ENCODE measurements at regions of chr9 and their contacts with region 1.

Region 1: GRCh38 chr9:76704593-76705204 is 59.5 kb upstream of the PCA3 start:
- DNase-seq: peak; percentile 58
- ATAC-seq: peak; percentile 64
- H3K4me3 ChIP-seq: no peak overlapping the region
- H3K27ac ChIP-seq: no peak overlapping the region
- H3K4me1 ChIP-seq: no peaks in the 10 kb centered on the region
- H3K27me3 ChIP-seq: peaks cover 0 to 22% of the 10 kb centered on the region in 2 experiments; a peak in 3 of 5 replicates
- CTCF ChIP-seq: peak; percentile 85
- EP300 ChIP-seq: no peak
- POLR2A ChIP-seq: no peak
- RAD21 ChIP-seq: peak; percentile 60; the same call in 1 of the 2 replicates

Region 2: DNA sequence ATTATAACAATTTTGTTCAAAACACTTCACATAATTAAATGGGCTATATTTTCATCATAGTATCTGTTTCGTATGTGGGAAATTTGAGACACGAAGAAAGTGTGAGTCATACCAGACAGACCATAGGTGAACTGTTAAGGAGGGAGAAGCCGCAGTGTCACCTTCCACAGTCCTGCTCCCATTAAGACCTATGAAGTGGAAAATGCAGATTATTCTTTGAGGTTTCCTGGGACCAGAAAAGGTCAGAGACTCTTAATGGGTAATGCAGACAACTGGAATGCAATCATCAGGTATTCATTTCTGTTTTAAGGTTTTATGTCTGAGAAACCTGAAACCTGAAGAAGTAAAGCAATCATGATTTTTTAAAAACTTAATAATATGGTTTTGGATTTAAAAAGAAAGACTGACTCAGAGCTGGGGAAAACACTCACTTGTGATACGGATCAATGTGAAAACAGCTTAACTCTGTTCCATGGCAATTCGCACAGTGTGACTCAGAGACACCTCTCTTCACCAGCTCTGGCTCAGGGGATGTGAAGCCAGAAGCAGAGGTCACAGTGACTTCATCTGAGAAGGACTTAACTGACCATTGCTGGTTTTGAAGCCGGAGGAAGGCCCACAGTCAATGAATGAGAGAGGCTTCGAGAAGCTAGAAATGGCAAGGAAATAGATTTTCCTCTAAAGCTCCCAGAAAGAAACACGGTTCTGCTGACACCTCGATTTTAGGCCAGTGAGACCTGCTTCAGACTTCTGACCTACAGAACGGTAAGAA is 263.0 kb before region 1 on chr9:
- CTCF ChIA-PET with region 1: interaction called, 15 read pairs
- POLR2A ChIA-PET with region 1: no interaction called
- in situ Hi-C with region 1: no loop called
- intact Hi-C with region 1: no loop called
- DNase-seq: no peak
- ATAC-seq: no peak; the same call in 2 of the 3 replicates
- H3K4me3 ChIP-seq: no peak overlapping the region
- H3K27ac ChIP-seq: no peak overlapping the region
- H3K4me1 ChIP-seq: peaks cover 12% of the 10 kb centered on the region
- H3K27me3 ChIP-seq: no peaks in the 10 kb centered on the region
- CTCF ChIP-seq: no peak
- EP300 ChIP-seq: no peak
- POLR2A ChIP-seq: no peak
- RAD21 ChIP-seq: no peak

Region 3: GRCh38 chr9:76451234-76451633 is 253.5 kb before region 1 on chr9:
- CTCF ChIA-PET with region 1: interaction called, 15 read pairs
- POLR2A ChIA-PET with region 1: no interaction called
- in situ Hi-C with region 1: no loop called
- intact Hi-C with region 1: loop called (anchors 1 kb)
- DNase-seq: no peak
- ATAC-seq: no peak
- H3K4me3 ChIP-seq: no peak overlapping the region
- H3K27ac ChIP-seq: no peak overlapping the region
- H3K4me1 ChIP-seq: peaks cover 6% of the 10 kb centered on the region
- H3K27me3 ChIP-seq: no peaks in the 10 kb centered on the region
- CTCF ChIP-seq: no peak
- EP300 ChIP-seq: no peak
- POLR2A ChIP-seq: no peak
- RAD21 ChIP-seq: no peak

Region 4: GRCh38 chr9:76667521-76667957 is 37.2 kb before region 1 on chr9:
- CTCF ChIA-PET with region 1: interaction called, 25 read pairs
- POLR2A ChIA-PET with region 1: no interaction called
- in situ Hi-C with region 1: loop called (anchors 5 kb)
- intact Hi-C with region 1: loop called (anchors 2 kb)
- DNase-seq: no peak
- ATAC-seq: no peak
- H3K4me3 ChIP-seq: no peak overlapping the region
- H3K27ac ChIP-seq: no peak overlapping the region
- H3K4me1 ChIP-seq: no peaks in the 10 kb centered on the region
- H3K27me3 ChIP-seq: no peaks in the 10 kb centered on the region
- CTCF ChIP-seq: no peak
- EP300 ChIP-seq: no peak
- POLR2A ChIP-seq: no peak
- RAD21 ChIP-seq: no peak

Measured in HepG2 (cell line).